ENCODE measurements at regions of chr6 and their contacts with region 1.

Region 1: GRCh38 chr6:159789377-159790148 is at the start of gene TCP1:
- DNase-seq: peak; percentile 100
- H3K4me3 ChIP-seq: peak within 1 kb of the TSS; percentile 64 to 81 (median 78)
- H3K27ac ChIP-seq: peak within 1 kb of the TSS; percentile 86 to 99 (median 99)
- H3K4me1 ChIP-seq: peaks cover 24 to 27% of the 10 kb centered on the region in 2 donors
- H3K27me3 ChIP-seq: no peaks in the 10 kb centered on the region
- CTCF ChIP-seq: no peak
- POLR2A ChIP-seq: peak; percentile 89 to 95
- total RNA-seq, gene TCP1: 93.4 to 139 (median 124) TPM

Region 2: GRCh38 chr6:159726918-159727716 is 62.4 kb before region 1 on chr6 and contains the start of gene WTAP:
- intact Hi-C with region 1: loop called (anchors 10 kb)
- DNase-seq: peak; percentile 97 to 98
- H3K4me3 ChIP-seq: peak within 1 kb of the TSS; percentile 66 to 98 (median 94)
- H3K27ac ChIP-seq: peak within 1 kb of the TSS; percentile 99 to 100 (median 99)
- H3K4me1 ChIP-seq: peaks cover 18 to 21% of the 10 kb centered on the region in 2 donors
- H3K27me3 ChIP-seq: no peaks in the 10 kb centered on the region
- CTCF ChIP-seq: no peak
- POLR2A ChIP-seq: peak; percentile 78 to 89
- total RNA-seq, gene WTAP: 83.6 to 132 (median 119) TPM

Region 3: DNA sequence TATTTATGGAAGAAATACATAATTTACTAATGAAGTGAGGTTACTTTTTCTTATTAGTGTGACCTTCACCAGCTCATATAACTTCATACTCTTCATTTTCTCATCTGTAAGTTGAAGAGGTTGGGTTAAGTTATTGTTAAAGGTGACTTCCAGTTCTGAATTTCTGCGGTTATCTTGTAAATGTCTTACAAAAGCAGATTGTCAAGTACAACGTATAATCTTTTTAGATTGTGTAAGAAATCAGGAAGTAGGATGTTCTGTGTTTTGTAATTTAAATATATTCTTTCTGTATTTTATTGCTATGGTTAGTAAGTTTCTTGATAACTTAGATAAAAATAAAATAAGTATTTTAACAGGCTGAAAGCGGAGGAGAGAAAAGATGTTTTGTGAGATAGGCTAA is 50.2 kb before region 1 on chr6:
- intact Hi-C with region 1: no loop called
- DNase-seq: no peak
- H3K4me3 ChIP-seq: no peak overlapping the region
- H3K27ac ChIP-seq: no peak overlapping the region
- H3K4me1 ChIP-seq: no peaks in the 10 kb centered on the region
- H3K27me3 ChIP-seq: no peaks in the 10 kb centered on the region
- CTCF ChIP-seq: no peak
- POLR2A ChIP-seq: no peak

Region 4: GRCh38 chr6:160077526-160077925 is 288.0 kb after region 1 on chr6:
- intact Hi-C with region 1: no loop called
- DNase-seq: no peak
- H3K4me3 ChIP-seq: no peak overlapping the region
- H3K27ac ChIP-seq: no peak overlapping the region
- H3K4me1 ChIP-seq: no peaks in the 10 kb centered on the region
- H3K27me3 ChIP-seq: no peaks in the 10 kb centered on the region
- CTCF ChIP-seq: no peak
- POLR2A ChIP-seq: no peak